ENCODE measurements at regions of chr1 and their contacts with region 1.

Region 1: GRCh38 chr1:175481126-175482066 is 262.0 kb downstream of the TNR start:
- DNase-seq: peak in 1 of 2 donors; percentile 22
- ATAC-seq: peak; percentile 48 to 72 (median 49)
- H3K4me3 ChIP-seq: no peak overlapping the region
- H3K4me3 Mint-ChIP-seq: no peak overlapping the region
- H3K27ac ChIP-seq: no peak overlapping the region
- H3K27ac Mint-ChIP-seq: no peak overlapping the region
- H3K4me1 ChIP-seq: peaks cover 3% of the 10 kb centered on the region
- H3K4me1 Mint-ChIP-seq: no peaks in the 10 kb centered on the region
- H3K27me3 ChIP-seq: no peaks in the 10 kb centered on the region
- H3K27me3 Mint-ChIP-seq: peaks cover 13 to 18% of the 10 kb centered on the region in 2 donors
- CTCF ChIP-seq: peak; percentile 71

Region 2: GRCh38 chr1:175742790-175743459 is 261.5 kb after region 1 on chr1:
- intact Hi-C with region 1: loop called (anchors 1 kb)
- DNase-seq: no peak
- ATAC-seq: peak in 1 of 3 donors; percentile 45
- H3K4me3 ChIP-seq: no peak overlapping the region
- H3K4me3 Mint-ChIP-seq: no peak overlapping the region
- H3K27ac ChIP-seq: no peak overlapping the region
- H3K27ac Mint-ChIP-seq: no peak overlapping the region
- H3K4me1 ChIP-seq: peaks cover 5% of the 10 kb centered on the region
- H3K4me1 Mint-ChIP-seq: peaks cover 5% of the 10 kb centered on the region in 2 donors
- H3K27me3 ChIP-seq: peaks cover 2% of the 10 kb centered on the region
- H3K27me3 Mint-ChIP-seq: peaks cover 17 to 65% of the 10 kb centered on the region in 2 donors
- CTCF ChIP-seq: no peak

Region 3: GRCh38 chr1:175887981-175888433 is 406.6 kb after region 1 on chr1:
- intact Hi-C with region 1: loop called (anchors 10 kb)
- DNase-seq: peak in 1 of 2 donors; percentile 20
- ATAC-seq: peak; percentile 44 to 83 (median 48)
- H3K4me3 ChIP-seq: no peak overlapping the region
- H3K4me3 Mint-ChIP-seq: no peak overlapping the region
- H3K27ac ChIP-seq: no peak overlapping the region
- H3K27ac Mint-ChIP-seq: no peak overlapping the region
- H3K4me1 ChIP-seq: peaks cover 6% of the 10 kb centered on the region
- H3K4me1 Mint-ChIP-seq: peaks cover 0 to 4% of the 10 kb centered on the region in 2 donors
- H3K27me3 ChIP-seq: no peaks in the 10 kb centered on the region
- H3K27me3 Mint-ChIP-seq: peaks cover 6 to 12% of the 10 kb centered on the region in 2 donors
- CTCF ChIP-seq: no peak